ENCODE measurements at regions of chr22 and their contacts with region 1.

Region 1: DNA sequence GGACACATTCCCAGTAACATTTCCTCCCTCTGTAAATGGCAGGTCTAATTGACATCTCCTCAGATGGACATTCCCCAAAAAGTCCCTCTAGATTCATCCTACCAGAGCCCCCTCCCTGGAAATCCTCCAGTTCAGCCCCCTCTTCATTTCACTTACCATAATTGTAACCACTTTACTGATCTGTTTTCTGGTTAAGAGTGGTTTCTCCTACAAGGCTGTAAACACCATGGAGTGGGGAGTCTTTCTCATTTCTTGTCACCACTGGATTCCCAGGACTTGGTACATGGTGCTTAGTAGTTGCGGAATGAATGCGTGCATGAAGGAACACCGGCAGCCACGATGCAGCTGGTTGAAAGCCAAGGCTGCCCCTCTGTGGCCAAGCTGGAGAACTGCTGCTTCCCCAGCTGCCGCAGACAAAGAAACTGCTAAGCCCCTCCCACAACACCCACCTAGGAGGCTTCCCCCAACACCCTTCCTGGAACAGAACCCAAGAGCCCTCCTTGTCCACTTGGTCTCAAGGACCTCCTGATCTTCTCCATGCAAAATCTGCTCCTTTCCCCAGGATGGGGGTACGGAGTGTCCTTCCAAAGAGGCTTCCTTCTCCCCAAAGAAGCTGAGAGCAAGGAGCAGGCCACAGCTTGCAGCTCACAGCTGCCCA is 18.6 kb upstream of the SCARF2 start:
- DNase-seq: peak; percentile 48
- H3K4me3 ChIP-seq: no peak overlapping the region
- H3K27ac ChIP-seq: no peak overlapping the region
- H3K4me1 ChIP-seq: no peaks in the 10 kb centered on the region
- H3K27me3 ChIP-seq: no peaks in the 10 kb centered on the region
- CTCF ChIP-seq: peak; percentile 85 to 91

Region 2: DNA sequence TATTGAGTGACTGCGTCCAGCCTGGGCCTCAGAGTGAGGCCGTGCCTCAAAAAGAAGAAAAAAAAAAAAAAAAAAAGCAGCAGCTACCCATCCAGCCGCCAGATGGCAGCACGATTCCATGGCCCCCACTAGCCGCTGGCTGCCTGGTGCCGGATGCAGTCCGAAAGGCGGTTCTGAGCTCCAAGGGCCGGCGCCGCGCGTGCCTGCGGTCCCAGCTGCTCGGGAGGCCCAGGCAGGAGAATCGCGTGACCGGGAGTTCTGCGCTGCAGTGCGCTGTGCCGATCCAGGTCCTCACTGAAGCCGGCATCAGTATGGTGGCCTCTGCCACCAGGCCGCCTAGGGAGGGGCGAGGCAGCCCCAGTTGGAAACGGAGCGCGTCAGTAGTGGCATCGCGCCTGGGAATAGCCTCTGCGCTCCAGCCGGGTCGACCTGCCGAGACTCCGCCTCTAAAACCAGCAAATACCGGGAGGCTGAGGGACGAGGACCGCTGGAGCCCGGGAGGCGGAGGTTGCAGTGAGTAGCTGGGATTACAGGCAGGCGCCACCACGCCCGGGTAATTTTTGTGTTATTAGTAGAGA is 37.9 kb before region 1 on chr22:
- CTCF ChIA-PET with region 1: interaction called, 30 read pairs
- dilution Hi-C with region 1: no loop called
- in situ Hi-C with region 1: no loop called
- intact Hi-C with region 1: loop called (anchors 1 kb)
- DNase-seq: peak; percentile 49
- H3K4me3 ChIP-seq: peak overlapping the region in 2 of 3 experiments; percentile 51 to 60
- H3K27ac ChIP-seq: no peak overlapping the region
- H3K4me1 ChIP-seq: peaks cover 5% of the 10 kb centered on the region
- H3K27me3 ChIP-seq: no peaks in the 10 kb centered on the region
- CTCF ChIP-seq: peak; percentile 61 to 87

Measured in mammary epithelial cell (primary cell).